SK-N-SH (cell line): ENCODE measurements at regions of chr19 and their contacts with region 1.

Region 1: DNA sequence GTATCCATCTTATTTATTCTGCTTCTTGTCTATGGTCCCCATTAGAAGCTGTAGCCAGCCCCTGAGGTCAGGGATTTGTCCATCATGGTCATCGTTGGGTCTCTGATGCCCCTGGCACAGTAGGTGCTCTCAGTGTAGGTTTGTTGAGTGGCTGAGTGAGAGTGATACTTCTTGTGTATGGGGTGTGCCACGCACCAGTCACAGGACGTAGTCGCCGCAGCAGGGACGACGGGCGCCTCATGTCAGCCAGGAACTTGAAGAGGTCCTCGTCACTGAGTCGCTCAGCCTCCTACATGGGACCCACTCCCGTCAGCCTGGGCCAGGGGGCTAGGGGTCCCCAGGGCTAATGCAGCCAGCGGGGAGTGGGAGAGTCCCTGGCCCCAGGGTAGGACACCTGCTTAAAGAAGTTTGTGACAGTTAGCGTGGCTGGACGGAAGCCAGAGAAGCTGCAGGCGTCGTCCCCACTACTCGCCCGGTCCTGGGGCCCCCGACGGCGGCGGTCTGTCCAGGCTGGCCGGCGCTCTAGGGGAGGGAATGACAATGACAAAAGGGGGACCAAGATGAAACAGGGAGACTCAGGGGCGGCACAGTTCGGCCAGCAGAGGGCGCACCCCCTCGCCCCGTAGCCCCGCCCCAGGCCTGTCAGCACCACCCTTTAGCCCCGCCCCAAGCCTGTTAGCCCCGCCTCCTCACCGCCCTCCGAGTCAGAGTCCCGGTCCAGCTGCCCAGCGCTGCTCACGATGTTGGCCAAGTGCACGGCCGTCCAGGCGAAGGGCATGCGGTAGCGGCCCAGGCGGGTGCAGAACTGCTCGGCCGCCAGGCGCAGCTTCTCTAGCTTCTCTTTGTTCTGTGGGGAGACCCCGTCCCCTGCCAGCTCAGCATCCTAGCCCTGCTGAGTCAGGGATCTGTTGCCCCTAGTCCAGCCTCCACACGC is 3.7 kb downstream of the ANGPTL8 start:
- DNase-seq: peak; percentile 100
- H3K4me3 ChIP-seq: peak overlapping the region in 1 of 2 experiments; percentile 37; a peak in 1 of 4 replicates
- H3K27ac ChIP-seq: no peak overlapping the region; a peak in 1 of 4 replicates
- H3K4me1 ChIP-seq: peaks cover 0 to 4% of the 10 kb centered on the region in 2 experiments; a peak in 1 of 4 replicates
- H3K27me3 ChIP-seq: no peaks in the 10 kb centered on the region
- CTCF ChIP-seq: peak; percentile 89
- EP300 ChIP-seq: no peak
- RAD21 ChIP-seq: no peak

Region 2: GRCh38 chr19:11050323-11051114 is 192.6 kb before region 1 on chr19:
- CTCF ChIA-PET with region 1: no interaction called
- POLR2A ChIA-PET with region 1: no interaction called
- DNase-seq: no peak
- H3K4me3 ChIP-seq: no peak overlapping the region
- H3K27ac ChIP-seq: no peak overlapping the region; a peak in 1 of 4 replicates
- H3K4me1 ChIP-seq: peaks cover 0 to 9% of the 10 kb centered on the region in 2 experiments; a peak in 1 of 4 replicates
- H3K27me3 ChIP-seq: no peaks in the 10 kb centered on the region
- CTCF ChIP-seq: no peak
- EP300 ChIP-seq: no peak
- RAD21 ChIP-seq: no peak

Region 3: GRCh38 chr19:11227201-11227886 is 15.8 kb before region 1 on chr19:
- CTCF ChIA-PET with region 1: interaction called, 19 read pairs
- POLR2A ChIA-PET with region 1: interaction called, 3 read pairs
- DNase-seq: peak; percentile 73
- H3K4me3 ChIP-seq: no peak overlapping the region
- H3K27ac ChIP-seq: no peak overlapping the region
- H3K4me1 ChIP-seq: no peaks in the 10 kb centered on the region
- H3K27me3 ChIP-seq: no peaks in the 10 kb centered on the region
- CTCF ChIP-seq: peak; percentile 33; the same call in 1 of the 2 replicates
- EP300 ChIP-seq: no peak
- RAD21 ChIP-seq: no peak

Region 4: DNA sequence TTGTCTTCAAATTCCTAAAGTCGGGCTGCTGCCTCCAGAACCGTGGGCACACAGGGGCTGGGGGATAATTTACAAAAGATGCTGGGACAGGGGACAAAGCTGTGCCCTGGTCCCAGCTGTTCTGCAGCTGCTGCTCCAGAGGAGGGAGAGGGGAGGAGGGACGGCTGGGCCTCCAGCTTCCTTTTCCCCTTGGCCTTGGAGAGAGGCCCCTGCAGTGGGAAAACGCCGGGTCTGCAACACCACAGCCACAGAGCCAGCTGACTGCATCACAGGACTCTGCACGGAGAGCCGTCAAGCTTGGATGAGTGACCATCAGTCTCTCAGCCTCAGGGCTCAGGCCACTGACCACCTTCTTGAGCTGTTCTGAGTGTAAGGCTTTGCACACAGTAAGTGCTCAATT is 13.1 kb after region 1 on chr19:
- CTCF ChIA-PET with region 1: interaction called, 57 read pairs
- POLR2A ChIA-PET with region 1: no interaction called
- DNase-seq: peak; percentile 55
- H3K4me3 ChIP-seq: no peak overlapping the region
- H3K27ac ChIP-seq: no peak overlapping the region
- H3K4me1 ChIP-seq: no peaks in the 10 kb centered on the region; a peak in 1 of 4 replicates
- H3K27me3 ChIP-seq: no peaks in the 10 kb centered on the region
- CTCF ChIP-seq: no peak
- EP300 ChIP-seq: no peak
- RAD21 ChIP-seq: no peak

Region 5: DNA sequence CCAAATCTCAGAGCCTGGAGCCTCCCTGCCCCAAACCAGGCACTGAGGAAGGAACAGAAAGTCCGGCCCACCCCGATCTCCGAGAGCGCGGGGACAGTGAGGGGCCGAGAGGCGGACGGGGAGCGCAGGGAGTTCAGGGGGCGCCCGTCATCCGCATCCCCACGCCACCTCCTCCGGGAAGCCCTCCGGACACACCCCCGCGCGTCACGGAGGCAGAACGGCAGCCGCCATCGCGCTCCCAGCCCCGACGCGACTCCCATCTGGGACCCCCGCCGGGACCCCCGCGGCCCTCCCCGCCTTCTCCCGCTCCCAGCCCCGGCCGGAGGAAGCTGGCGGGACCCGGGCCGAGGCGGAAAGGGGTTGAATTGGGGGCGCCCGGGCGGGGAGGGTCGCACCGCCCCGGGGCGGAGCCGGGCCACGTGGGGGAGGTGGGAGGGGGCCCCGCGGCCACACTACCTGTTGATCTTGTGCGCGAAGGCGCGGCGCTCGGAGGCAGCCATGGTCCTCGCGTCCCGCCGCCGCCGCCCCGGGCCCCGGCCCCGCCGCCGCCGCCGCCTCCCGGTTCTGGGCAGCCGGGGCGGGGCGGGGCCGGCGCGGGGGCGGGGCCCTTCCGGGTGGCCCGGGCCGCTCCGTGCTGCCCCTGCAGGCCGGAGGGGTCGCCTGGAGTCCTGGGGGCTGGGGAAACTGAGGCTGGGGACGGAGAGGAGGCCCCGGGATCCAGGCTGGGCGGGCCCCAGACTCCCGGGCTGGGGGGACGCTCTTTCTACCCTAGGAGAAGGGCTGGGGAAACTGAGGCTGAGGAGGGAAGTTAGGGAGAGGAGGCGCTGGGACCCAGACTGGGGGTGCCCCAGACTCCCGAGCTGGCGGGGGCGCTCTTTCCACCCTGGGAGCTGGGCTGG is 19.1 kb after region 1 on chr19 and contains the start of gene DOCK6:
- CTCF ChIA-PET with region 1: interaction called, 57 read pairs
- POLR2A ChIA-PET with region 1: no interaction called
- DNase-seq: peak; percentile 91
- H3K4me3 ChIP-seq: peak within 1 kb of the TSS; percentile 62 to 72
- H3K27ac ChIP-seq: no peak within 1 kb of the TSS; a peak in 1 of 4 replicates
- H3K4me1 ChIP-seq: peaks cover 0 to 4% of the 10 kb centered on the region in 2 experiments; a peak in 1 of 4 replicates
- H3K27me3 ChIP-seq: no peaks in the 10 kb centered on the region
- CTCF ChIP-seq: peak; percentile 59
- EP300 ChIP-seq: no peak
- RAD21 ChIP-seq: no peak
- polyA plus RNA-seq, gene DOCK6: 14.0 and 18.3 TPM in 2 replicates